Adrenal gland (tissue), 19 donors: ENCODE measurements at regions of chr7 and their contacts with region 1.

Region 1: DNA sequence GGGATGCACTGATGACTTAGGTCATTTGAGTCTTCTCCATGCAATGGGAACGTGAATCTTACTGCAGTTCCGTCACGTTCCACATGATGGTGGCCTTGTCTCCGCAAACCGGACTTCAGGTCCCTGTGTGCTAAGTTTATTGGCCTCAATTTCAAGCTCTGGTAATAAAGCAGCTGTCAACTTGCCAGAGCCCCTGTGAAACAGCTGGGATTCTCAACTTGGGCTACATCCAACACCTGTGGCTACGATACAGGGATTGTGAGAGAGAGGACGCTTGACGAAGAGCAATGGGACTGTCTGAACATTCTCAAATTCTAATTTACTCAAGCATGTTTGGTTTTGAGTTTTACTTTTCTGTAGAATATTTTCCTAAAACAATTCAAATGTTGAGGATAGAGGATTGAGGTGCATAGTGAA is 174.2 kb downstream of the PTN start:
- DNase-seq: peak; percentile 45 to 86 (median 66)
- H3K4me3 ChIP-seq: no peak overlapping the region
- H3K27ac ChIP-seq: no peak overlapping the region
- H3K4me1 ChIP-seq: no peaks in the 10 kb centered on the region
- H3K27me3 ChIP-seq: peaks cover 4% of the 10 kb centered on the region
- CTCF ChIP-seq: peak; percentile 38 to 83 (median 72)
- POLR2A ChIP-seq: no peak

Region 2: GRCh38 chr7:137120690-137121089 is 48.6 kb before region 1 on chr7:
- intact Hi-C with region 1: no loop called
- DNase-seq: no peak
- H3K4me3 ChIP-seq: no peak overlapping the region
- H3K27ac ChIP-seq: no peak overlapping the region
- H3K4me1 ChIP-seq: no peaks in the 10 kb centered on the region
- H3K27me3 ChIP-seq: no peaks in the 10 kb centered on the region
- CTCF ChIP-seq: no peak
- POLR2A ChIP-seq: no peak

Region 3: GRCh38 chr7:137221467-137221866 is 52.2 kb after region 1 on chr7:
- intact Hi-C with region 1: no loop called
- DNase-seq: no peak
- H3K4me3 ChIP-seq: no peak overlapping the region
- H3K27ac ChIP-seq: no peak overlapping the region
- H3K4me1 ChIP-seq: no peaks in the 10 kb centered on the region
- H3K27me3 ChIP-seq: no peaks in the 10 kb centered on the region
- CTCF ChIP-seq: no peak
- POLR2A ChIP-seq: no peak

Region 4: DNA sequence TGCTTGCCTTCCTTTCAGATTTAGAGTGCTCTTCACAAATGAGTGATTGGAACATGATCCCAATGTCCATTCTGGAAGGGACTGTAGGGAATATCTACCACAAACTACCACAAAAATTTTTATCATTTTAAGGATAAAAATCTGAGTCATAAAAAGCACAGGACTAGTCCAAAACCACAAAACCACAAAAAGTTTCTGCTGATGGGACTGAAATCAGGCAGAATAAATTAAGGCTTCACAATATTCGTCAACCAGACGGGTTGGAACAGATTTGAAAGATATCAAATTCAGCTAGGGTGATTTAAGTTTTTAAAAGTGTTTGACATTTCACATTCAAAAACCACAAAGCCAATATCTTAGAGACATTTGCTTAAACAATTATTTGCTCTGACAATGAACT is 274.3 kb after region 1 on chr7:
- intact Hi-C with region 1: loop called in 1 of 2 experiments (anchors 10 kb)
- DNase-seq: no peak
- H3K4me3 ChIP-seq: no peak overlapping the region
- H3K27ac ChIP-seq: no peak overlapping the region
- H3K4me1 ChIP-seq: peaks cover 0 to 5% of the 10 kb centered on the region in 2 donors
- H3K27me3 ChIP-seq: no peaks in the 10 kb centered on the region
- CTCF ChIP-seq: no peak
- POLR2A ChIP-seq: no peak

Region 5: DNA sequence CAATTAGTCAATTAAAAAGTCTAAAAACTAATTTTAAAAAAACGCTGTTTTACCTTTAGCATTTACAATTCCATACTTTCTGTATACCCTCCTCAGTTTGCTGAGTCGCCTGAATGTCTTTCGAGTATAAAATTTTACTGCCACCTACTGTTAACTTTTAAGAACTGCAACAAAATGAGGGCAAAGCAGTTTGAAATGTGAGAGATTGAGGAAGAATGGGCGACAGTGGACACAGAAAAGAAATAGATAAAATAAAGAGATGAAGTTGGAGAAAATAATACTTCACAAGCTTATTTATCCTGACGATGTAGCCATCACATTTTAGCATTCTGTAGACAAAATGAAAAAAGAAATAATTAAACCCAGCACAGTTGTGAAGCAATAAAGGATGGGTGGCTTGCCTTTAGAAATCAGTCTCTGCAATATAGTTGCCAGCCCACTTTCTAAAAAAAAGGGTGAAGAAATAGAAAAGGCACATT is 285.0 kb after region 1 on chr7:
- intact Hi-C with region 1: loop called (anchors 2 to 10 kb)
- DNase-seq: no peak
- H3K4me3 ChIP-seq: no peak overlapping the region
- H3K27ac ChIP-seq: no peak overlapping the region
- H3K4me1 ChIP-seq: no peaks in the 10 kb centered on the region
- H3K27me3 ChIP-seq: no peaks in the 10 kb centered on the region
- CTCF ChIP-seq: peak; percentile 51 to 72 (median 60)
- POLR2A ChIP-seq: no peak

Region 6: GRCh38 chr7:137579913-137580640 is 410.8 kb after region 1 on chr7:
- intact Hi-C with region 1: loop called in 1 of 2 experiments (anchors 10 kb)
- DNase-seq: no peak
- H3K4me3 ChIP-seq: no peak overlapping the region
- H3K27ac ChIP-seq: no peak overlapping the region
- H3K4me1 ChIP-seq: no peaks in the 10 kb centered on the region
- H3K27me3 ChIP-seq: no peaks in the 10 kb centered on the region
- CTCF ChIP-seq: no peak
- POLR2A ChIP-seq: no peak

Region 7: DNA sequence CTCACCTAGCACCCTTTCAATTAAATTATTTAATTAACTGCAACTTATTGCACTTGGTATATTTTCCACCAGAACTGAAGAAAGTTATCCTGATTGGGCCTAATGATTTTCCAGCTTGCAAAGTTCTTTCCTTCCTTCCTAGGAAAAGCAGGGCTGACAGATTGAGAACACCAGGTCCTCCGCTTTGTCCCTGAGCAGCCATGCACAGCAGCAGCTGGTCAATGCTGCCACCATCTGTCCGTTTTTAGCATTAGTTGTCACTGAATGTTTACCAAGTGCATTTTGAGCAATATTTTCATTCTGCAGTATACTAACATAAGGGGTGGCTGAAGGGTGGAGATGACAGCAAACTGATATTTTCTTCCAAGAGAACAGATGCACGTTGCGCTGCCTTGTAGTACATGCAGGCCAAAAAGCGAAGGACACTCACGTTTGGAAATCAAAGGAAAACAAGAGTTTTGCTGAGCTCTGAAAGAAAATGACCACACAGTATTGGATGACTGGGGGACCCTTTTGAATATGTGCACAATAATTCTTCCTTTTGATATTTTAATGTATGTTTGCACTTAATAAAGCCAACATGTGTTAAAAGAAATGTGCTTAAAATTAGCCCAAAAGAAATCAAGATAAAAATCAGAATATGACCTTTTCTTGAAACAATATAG is 423.1 kb after region 1 on chr7:
- intact Hi-C with region 1: loop called (anchors 5 to 10 kb)
- DNase-seq: peak; percentile 28 to 78 (median 56)
- H3K4me3 ChIP-seq: no peak overlapping the region
- H3K27ac ChIP-seq: no peak overlapping the region
- H3K4me1 ChIP-seq: no peaks in the 10 kb centered on the region
- H3K27me3 ChIP-seq: no peaks in the 10 kb centered on the region
- CTCF ChIP-seq: peak; percentile 43 to 75 (median 63)
- POLR2A ChIP-seq: no peak